Activated CD4-positive, alpha-beta T cell treated with anti-CD3 and anti-CD28 coated beads, Interleukin-2, amount 10 ng/mL, durations not matched to agents 24 days and 14 days (primary cell): ENCODE measurements at regions of chr1 and their contacts with region 1.

Region 1: DNA sequence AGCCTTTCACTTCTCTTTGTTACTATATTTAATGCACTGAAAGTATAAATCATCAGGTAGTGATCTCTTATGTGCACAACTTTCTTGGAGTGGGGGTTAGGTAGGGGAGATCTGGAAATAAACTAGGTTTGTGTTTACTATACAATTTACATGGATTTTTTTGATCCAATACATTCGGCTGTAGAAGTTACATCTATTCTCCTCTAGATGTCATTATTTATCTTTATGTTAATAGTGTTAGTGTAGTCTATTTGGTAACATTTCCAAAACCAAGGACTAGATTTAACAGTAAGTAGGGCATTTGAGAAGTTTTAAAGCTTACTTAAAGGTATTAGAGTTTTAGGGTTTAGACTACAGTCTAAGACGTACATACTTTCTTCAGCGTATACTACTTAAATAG is 5.4 kb downstream of the VPS45 start:
- DNase-seq: no peak
- H3K4me3 Mint-ChIP-seq: no peak overlapping the region
- H3K27ac Mint-ChIP-seq: peak overlapping the region; percentile 19
- H3K4me1 Mint-ChIP-seq: peaks cover 27% of the 10 kb centered on the region
- H3K27me3 Mint-ChIP-seq: no peaks in the 10 kb centered on the region

Region 2: DNA sequence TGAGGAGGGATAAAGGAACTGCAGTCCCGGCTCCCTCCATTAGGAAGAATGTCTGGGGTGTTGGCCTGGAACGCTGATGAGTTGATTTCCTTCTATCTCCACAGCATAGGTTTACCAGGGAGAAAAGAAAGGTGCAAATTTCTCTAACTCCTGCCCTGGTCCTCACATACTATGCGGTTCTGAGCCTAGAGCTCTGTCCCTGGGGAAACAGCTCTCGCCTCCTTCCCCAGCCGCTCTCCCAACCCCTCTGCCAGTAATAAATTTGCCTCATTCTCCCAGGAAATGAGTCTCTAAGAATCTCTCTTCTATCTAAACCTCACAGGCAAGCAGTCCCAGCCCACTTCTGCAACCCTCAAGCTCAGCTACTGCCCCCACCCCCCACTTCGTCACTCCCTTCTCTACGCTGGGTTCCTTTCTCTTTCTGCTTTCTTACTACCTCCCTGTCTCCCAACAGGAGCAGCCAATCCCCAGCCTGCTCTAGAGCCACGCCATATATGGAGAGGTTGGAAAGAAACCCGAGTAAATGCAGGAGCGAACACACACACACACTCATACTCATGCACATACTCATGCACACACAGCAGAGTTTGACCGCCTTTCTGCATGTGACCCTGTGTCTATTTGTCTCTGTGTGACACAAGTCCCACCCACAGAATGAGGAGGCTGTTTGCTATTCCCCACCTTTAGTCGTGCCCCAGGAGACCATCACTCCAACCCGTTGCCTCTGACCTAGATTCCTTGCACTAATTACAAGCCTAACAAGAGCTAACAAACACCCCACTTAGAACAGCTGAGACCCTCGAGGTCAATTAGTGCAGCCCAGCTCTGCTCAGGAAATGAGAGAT is 90.1 kb after region 1 on chr1:
- intact Hi-C with region 1: loop called (anchors 1 kb)
- DNase-seq: peak; percentile 70
- H3K4me3 Mint-ChIP-seq: peak overlapping the region; percentile 3
- H3K27ac Mint-ChIP-seq: no peak overlapping the region
- H3K4me1 Mint-ChIP-seq: peaks cover 42% of the 10 kb centered on the region
- H3K27me3 Mint-ChIP-seq: peaks cover 4% of the 10 kb centered on the region